ENCODE measurements at regions of chr3 and their contacts with region 1.

Region 1: DNA sequence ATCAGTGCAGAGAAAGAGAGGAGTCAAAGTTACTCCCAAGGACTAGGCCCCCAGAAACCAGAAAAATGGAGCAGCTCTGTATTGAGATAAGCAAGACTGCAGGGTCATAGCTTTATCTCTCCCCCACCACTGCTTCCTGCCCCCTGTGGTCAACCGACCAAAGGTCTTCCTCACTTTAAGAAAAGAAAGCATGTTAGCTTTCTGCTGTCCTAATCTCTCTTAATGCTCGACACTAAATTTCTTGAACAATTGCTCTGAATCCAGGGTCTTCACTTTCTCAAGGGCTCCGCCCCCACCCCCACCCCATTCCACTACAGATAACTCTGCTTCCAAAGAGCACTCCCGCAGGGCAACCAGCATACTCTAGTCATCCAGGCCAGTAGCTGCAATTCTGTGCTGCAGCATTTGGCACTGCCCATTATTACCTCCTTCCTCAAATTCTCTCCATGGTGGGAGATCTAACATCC is 31.9 kb downstream of the TNIK start:
- DNase-seq: no peak
- ATAC-seq: peak; percentile 85
- H3K4me3 ChIP-seq: no peak overlapping the region
- H3K27ac ChIP-seq: peak overlapping the region; percentile 32; the same call in 1 of the 2 replicates
- H3K4me1 ChIP-seq: peaks cover 8% of the 10 kb centered on the region; the same call in 1 of the 2 replicates
- H3K27me3 ChIP-seq: no peaks in the 10 kb centered on the region
- CTCF ChIP-seq: 0 out of 6 replicates have a peak, but pooled peaks of 1 of the 3 experiments have one; percentile 11
- EP300 ChIP-seq: no peak
- POLR2A ChIP-seq: no peak
- RAD21 ChIP-seq: no peak

Region 2: GRCh38 chr3:171410186-171410585 is 18.2 kb before region 1 on chr3:
- CTCF ChIA-PET with region 1: interaction called, 10 read pairs
- POLR2A ChIA-PET with region 1: no interaction called
- RAD21 ChIA-PET with region 1: interaction called, 6 read pairs
- SMC1A ChIA-PET with region 1: interaction called, 11 read pairs
- in situ Hi-C with region 1: no loop called
- intact Hi-C with region 1: no loop called
- DNase-seq: no peak
- ATAC-seq: no peak
- H3K4me3 ChIP-seq: no peak overlapping the region
- H3K27ac ChIP-seq: no peak overlapping the region
- H3K4me1 ChIP-seq: peaks cover 21% of the 10 kb centered on the region
- H3K27me3 ChIP-seq: no peaks in the 10 kb centered on the region
- CTCF ChIP-seq: no peak
- EP300 ChIP-seq: no peak
- POLR2A ChIP-seq: no peak
- RAD21 ChIP-seq: no peak

Region 3: GRCh38 chr3:171417813-171418212 is 10.5 kb before region 1 on chr3:
- CTCF ChIA-PET with region 1: interaction called, 10 read pairs
- POLR2A ChIA-PET with region 1: interaction called, 9 read pairs
- RAD21 ChIA-PET with region 1: interaction called, 6 read pairs
- SMC1A ChIA-PET with region 1: interaction called, 11 read pairs
- in situ Hi-C with region 1: no loop called
- intact Hi-C with region 1: no loop called
- DNase-seq: no peak
- ATAC-seq: no peak
- H3K4me3 ChIP-seq: no peak overlapping the region
- H3K27ac ChIP-seq: no peak overlapping the region
- H3K4me1 ChIP-seq: peaks cover 9% of the 10 kb centered on the region
- H3K27me3 ChIP-seq: no peaks in the 10 kb centered on the region
- CTCF ChIP-seq: no peak
- EP300 ChIP-seq: no peak
- POLR2A ChIP-seq: no peak
- RAD21 ChIP-seq: no peak

Region 4: DNA sequence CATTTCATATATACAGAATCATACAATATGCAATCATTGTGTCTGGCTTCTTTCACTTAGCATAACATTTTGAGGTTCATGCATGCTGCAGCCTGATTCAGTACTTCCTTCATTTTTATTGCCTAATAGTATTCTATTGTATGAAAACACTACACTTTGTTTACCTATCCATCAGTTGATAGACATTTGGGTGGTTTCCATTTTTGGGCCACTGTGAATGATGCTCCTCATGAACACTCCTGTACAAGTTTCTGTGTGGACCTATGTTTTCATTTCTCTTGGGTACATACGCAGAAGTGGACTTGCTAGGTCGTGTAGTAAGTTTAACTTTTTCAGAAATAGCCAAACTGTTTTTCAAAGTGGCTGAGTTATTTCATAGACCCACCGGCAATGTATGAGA is 13.0 kb after region 1 on chr3:
- CTCF ChIA-PET with region 1: interaction called, 11 read pairs
- POLR2A ChIA-PET with region 1: interaction called, 4 read pairs
- RAD21 ChIA-PET with region 1: interaction called, 18 read pairs
- SMC1A ChIA-PET with region 1: interaction called, 20 read pairs
- in situ Hi-C with region 1: no loop called
- intact Hi-C with region 1: no loop called
- DNase-seq: no peak
- ATAC-seq: no peak
- H3K4me3 ChIP-seq: no peak overlapping the region
- H3K27ac ChIP-seq: no peak overlapping the region; the same call in 1 of the 2 replicates
- H3K4me1 ChIP-seq: peaks cover 41% of the 10 kb centered on the region
- H3K27me3 ChIP-seq: no peaks in the 10 kb centered on the region
- CTCF ChIP-seq: no peak
- EP300 ChIP-seq: no peak
- POLR2A ChIP-seq: no peak
- RAD21 ChIP-seq: no peak

Region 5: GRCh38 chr3:171447338-171447760 is 19.0 kb after region 1 on chr3:
- CTCF ChIA-PET with region 1: interaction called, 3 read pairs
- POLR2A ChIA-PET with region 1: interaction called, 4 read pairs
- RAD21 ChIA-PET with region 1: interaction called, 18 read pairs
- SMC1A ChIA-PET with region 1: interaction called, 7 read pairs
- in situ Hi-C with region 1: no loop called
- intact Hi-C with region 1: no loop called
- DNase-seq: no peak
- ATAC-seq: peak; percentile 37
- H3K4me3 ChIP-seq: no peak overlapping the region
- H3K27ac ChIP-seq: no peak overlapping the region
- H3K4me1 ChIP-seq: peaks cover 28% of the 10 kb centered on the region
- H3K27me3 ChIP-seq: no peaks in the 10 kb centered on the region
- CTCF ChIP-seq: no peak
- EP300 ChIP-seq: no peak
- POLR2A ChIP-seq: no peak
- RAD21 ChIP-seq: no peak